ENCODE measurements at regions of chr20 and their contacts with region 1.

Region 1: DNA sequence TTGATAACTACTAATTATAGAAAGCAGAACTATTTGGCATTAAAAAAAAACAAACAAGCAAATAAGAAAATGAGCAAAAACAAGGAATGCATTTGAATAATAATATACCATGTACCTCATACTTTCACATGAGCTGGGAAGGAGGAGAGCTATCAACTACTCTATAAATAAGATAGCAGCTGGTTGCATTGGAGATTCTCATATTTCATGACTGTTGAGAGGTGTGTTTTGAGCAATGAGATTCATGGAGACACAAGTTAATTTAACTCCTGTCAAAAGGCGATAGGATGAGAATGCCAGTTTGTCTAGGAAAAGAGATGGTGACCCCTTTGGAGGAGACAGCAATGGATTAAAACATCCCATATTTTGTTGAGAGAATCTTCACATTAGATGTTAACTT is 348.8 kb upstream of the SPTLC3 start:
- DNase-seq: no peak
- H3K4me3 ChIP-seq: no peak overlapping the region
- H3K4me3 Mint-ChIP-seq: no peak overlapping the region
- H3K27ac ChIP-seq: no peak overlapping the region
- H3K27ac Mint-ChIP-seq: no peak overlapping the region
- H3K4me1 ChIP-seq: no peaks in the 10 kb centered on the region
- H3K4me1 Mint-ChIP-seq: no peaks in the 10 kb centered on the region
- H3K27me3 ChIP-seq: no peaks in the 10 kb centered on the region
- H3K27me3 Mint-ChIP-seq: peaks cover 0 to 2% (median 0%) of the 10 kb centered on the region in 3 donors
- CTCF ChIP-seq: no peak

Region 2: GRCh38 chr20:12715991-12716680 is 56.2 kb after region 1 on chr20:
- intact Hi-C with region 1: loop called in 1 of 2 experiments (anchors 10 kb)
- DNase-seq: no peak
- H3K4me3 ChIP-seq: no peak overlapping the region
- H3K4me3 Mint-ChIP-seq: no peak overlapping the region
- H3K27ac ChIP-seq: no peak overlapping the region
- H3K27ac Mint-ChIP-seq: no peak overlapping the region
- H3K4me1 ChIP-seq: no peaks in the 10 kb centered on the region
- H3K4me1 Mint-ChIP-seq: no peaks in the 10 kb centered on the region
- H3K27me3 ChIP-seq: no peaks in the 10 kb centered on the region
- H3K27me3 Mint-ChIP-seq: peaks cover 0 to 1% (median 0%) of the 10 kb centered on the region in 3 donors
- CTCF ChIP-seq: no peak

Measured in CD14-positive monocyte (primary cell).